BJ (cell line): ENCODE measurements at regions of chr15 and their contacts with region 1.

Region 1: GRCh38 chr15:66369773-66370651 is 13.5 kb upstream of the TIPIN start:
- DNase-seq: no peak
- H3K4me3 ChIP-seq: no peak overlapping the region
- H3K27me3 ChIP-seq: no peaks in the 10 kb centered on the region
- CTCF ChIP-seq: no peak

Region 2: GRCh38 chr15:66323312-66323928 is 46.6 kb before region 1 on chr15:
- CTCF ChIA-PET with region 1: no interaction called
- POLR2A ChIA-PET with region 1: no interaction called
- DNase-seq: no peak
- H3K4me3 ChIP-seq: no peak overlapping the region
- H3K27me3 ChIP-seq: no peaks in the 10 kb centered on the region
- CTCF ChIP-seq: no peak

Region 3: DNA sequence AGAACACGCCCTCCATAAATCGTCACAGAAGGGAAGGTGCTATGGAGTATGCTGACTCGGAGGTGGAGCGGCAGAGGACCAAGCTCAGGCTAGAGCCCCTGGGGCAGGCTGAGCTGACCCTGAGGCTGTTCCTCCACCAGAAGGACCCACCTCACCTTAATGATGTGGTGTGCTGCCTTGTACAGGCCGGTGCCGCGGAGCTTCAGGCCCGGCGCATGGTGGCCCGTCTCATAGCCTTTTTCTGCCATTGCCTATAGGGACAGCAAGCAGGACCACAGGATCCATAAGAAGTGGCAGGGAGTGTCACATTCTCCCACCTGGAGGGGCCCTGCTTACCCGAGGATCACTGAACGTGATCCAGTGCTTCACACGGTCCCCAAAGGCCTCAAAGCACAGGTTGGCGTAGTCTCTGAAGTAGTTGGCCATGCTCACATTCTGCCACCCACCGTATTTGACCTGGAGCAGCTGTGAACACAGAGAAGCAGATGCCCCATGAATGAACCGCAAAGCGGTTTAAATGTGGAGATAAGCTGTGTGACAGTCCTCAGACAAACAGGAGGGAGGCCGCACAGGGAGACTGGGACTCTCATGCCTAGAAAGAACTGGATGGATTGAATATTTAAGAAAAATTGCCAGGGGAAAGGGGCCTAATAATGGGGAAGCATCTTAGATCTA is 191.0 kb after region 1 on chr15:
- CTCF ChIA-PET with region 1: no interaction called
- POLR2A ChIA-PET with region 1: interaction called, 12 read pairs
- DNase-seq: no peak
- H3K4me3 ChIP-seq: no peak overlapping the region
- H3K27me3 ChIP-seq: no peaks in the 10 kb centered on the region
- CTCF ChIP-seq: no peak